CD4-positive, alpha-beta T cell (primary cell): ENCODE measurements at regions of chr6 and their contacts with region 1.

Region 1: DNA sequence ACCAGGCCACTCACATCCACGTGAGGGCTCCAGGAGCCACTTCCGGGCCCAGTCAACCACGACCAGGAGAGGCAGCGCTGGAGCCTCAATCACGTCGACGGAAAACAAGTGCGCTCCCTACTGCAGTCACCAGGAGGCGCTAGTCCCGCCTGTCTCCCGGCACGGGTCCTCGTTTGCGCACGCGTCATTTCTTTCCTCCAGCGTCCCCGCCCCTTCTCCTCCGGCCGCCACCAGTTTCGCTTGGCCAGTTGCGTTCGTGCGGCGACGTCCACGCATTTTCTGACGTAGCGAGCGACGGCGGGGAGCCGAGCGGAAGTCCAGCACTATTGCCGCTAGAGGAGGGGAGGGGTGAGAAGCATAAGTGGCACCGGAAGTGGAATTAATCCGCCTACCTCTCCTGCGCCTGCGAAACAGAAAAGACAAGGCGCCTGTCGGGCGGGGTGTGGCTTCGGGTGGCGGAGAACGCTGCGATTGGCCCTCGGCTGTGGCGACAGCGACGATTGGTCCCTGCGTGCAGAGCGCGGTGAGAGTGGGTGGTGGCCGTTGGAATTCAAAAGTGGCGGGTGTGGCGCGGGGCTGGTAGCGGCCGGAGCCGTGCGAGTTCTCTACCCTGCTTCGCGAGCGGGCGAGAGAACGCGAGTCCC is at the start of gene KIFC1:
- DNase-seq: peak; percentile 98 to 100 (median 99)
- ATAC-seq: peak; percentile 86
- H3K4me3 ChIP-seq: peak within 1 kb of the TSS; percentile 65
- H3K4me3 Mint-ChIP-seq: peak within 1 kb of the TSS; percentile 87
- H3K27ac ChIP-seq: peak within 1 kb of the TSS; percentile 69 to 78
- H3K27ac Mint-ChIP-seq: peak within 1 kb of the TSS; percentile 91
- H3K4me1 ChIP-seq: peaks cover 25% of the 10 kb centered on the region
- H3K4me1 Mint-ChIP-seq: peaks cover 23% of the 10 kb centered on the region
- H3K27me3 ChIP-seq: no peaks in the 10 kb centered on the region
- H3K27me3 Mint-ChIP-seq: no peaks in the 10 kb centered on the region
- CTCF ChIP-seq: peak; percentile 99
- total RNA-seq, gene KIFC1: 1.2 to 1.6 TPM

Region 2: GRCh38 chr6:33323623-33323948 is 67.8 kb before region 1 on chr6:
- CTCF ChIA-PET with region 1: interaction called, 12 read pairs
- POLR2A ChIA-PET with region 1: no interaction called
- intact Hi-C with region 1: loop called (anchors 1 kb)
- DNase-seq: peak in 1 of 14 experiments; percentile 41
- ATAC-seq: no peak
- H3K4me3 ChIP-seq: peak overlapping the region; percentile 96
- H3K4me3 Mint-ChIP-seq: peak overlapping the region; percentile 100
- H3K27ac ChIP-seq: peak overlapping the region; percentile 77 to 92
- H3K27ac Mint-ChIP-seq: peak overlapping the region; percentile 96
- H3K4me1 ChIP-seq: peaks cover 44% of the 10 kb centered on the region
- H3K4me1 Mint-ChIP-seq: peaks cover 57% of the 10 kb centered on the region
- H3K27me3 ChIP-seq: no peaks in the 10 kb centered on the region
- H3K27me3 Mint-ChIP-seq: no peaks in the 10 kb centered on the region
- CTCF ChIP-seq: no peak

Region 3: DNA sequence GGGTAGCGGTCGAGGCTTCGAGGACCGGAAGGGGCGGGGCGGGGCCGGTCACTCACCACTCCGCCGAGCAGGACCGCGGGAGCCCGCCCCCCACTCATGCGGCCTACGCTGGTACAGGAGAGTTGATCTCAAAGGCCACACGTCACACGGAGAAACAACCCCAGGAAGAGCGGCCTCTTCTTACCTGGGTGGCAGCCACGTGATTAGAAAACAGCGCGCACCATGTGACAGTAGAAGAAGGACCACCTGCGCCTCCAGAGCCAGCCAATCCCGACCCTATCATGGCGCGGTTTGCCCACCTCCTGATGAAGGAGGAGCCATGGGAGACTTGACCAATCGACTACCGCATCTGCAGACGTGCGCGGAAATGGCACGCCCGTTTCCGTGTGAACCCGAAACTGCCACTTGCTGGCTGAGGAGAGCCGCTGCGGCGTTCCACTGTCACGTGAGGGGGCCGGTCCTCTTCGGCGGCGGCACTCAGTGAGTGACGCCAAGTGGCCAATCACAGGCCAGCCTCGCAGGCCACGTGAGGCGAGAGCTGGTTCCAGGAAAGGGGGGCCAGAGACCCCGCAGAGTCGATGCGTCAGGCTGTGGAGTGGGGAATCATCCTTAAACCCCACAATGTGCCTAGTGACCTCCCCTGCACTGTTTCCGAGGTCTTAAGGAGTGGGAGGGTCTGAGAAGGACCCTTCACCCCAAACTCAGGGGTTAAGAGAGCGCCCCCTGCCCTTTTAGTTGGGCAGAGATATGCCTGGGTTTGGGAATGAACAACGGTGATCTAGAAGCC is 26.7 kb after region 1 on chr6 and contains the start of gene CUTA:
- CTCF ChIA-PET with region 1: interaction called, 5 read pairs
- POLR2A ChIA-PET with region 1: interaction called, 12 read pairs
- intact Hi-C with region 1: no loop called
- DNase-seq: peak; percentile 97 to 100 (median 98)
- ATAC-seq: peak; percentile 85
- H3K4me3 ChIP-seq: peak within 1 kb of the TSS; percentile 82
- H3K4me3 Mint-ChIP-seq: peak within 1 kb of the TSS; percentile 92
- H3K27ac ChIP-seq: peak within 1 kb of the TSS; percentile 97 to 99
- H3K27ac Mint-ChIP-seq: peak within 1 kb of the TSS; percentile 98
- H3K4me1 ChIP-seq: peaks cover 77% of the 10 kb centered on the region
- H3K4me1 Mint-ChIP-seq: peaks cover 79% of the 10 kb centered on the region
- H3K27me3 ChIP-seq: no peaks in the 10 kb centered on the region
- H3K27me3 Mint-ChIP-seq: no peaks in the 10 kb centered on the region
- CTCF ChIP-seq: peak; percentile 30
- total RNA-seq, gene CUTA: 176 to 185 TPM

Region 4: DNA sequence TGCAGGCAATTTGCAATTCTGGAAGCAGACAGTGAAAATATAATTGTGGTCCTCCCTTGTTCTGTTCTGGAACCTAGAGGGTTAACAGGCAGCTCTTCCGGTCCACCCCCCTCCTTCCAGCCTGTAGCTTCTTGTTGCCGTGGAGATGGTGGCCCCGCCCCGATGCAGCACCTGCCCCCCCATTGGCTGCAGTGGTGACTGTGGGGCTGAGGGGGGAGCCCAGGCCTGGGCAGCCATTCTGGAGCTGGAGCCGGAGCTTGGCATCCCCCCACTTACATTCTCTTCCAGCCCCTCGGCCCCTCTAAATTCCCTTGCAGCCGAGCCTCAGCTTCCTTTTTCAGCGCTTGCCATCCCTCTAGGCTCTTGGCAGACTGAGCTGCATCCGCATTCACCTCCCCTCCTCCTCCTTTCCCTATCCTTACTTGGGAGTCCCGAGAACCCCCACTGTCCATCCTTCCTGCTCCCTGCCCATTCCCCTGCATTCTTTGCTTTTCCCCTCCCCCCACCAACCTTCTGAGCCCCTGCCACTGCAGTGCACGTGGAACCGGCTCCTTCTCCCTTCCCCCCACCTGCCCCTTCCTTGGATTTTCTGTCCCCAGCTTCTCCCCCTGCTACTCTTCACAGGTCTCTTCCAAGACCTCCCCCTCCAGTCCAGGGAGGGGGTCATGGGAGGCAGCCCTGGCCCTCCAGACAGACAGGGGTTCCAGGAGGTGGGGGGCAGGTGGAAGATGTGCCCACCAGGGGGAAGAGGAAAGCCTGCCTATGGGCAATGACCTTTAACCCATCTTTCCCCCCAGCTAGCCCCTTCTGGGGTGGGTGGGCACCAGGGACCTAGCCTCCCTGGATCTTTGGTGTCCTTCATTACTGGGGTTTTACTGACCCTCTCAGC is 39.8 kb after region 1 on chr6:
- CTCF ChIA-PET with region 1: interaction called, 25 read pairs
- POLR2A ChIA-PET with region 1: interaction called, 14 read pairs
- intact Hi-C with region 1: loop called in 1 of 2 experiments (anchors 1 kb)
- DNase-seq: peak; percentile 74 to 92 (median 85)
- ATAC-seq: peak; percentile 66
- H3K4me3 ChIP-seq: peak overlapping the region; percentile 71
- H3K4me3 Mint-ChIP-seq: peak overlapping the region; percentile 93
- H3K27ac ChIP-seq: peak overlapping the region; percentile 52 to 64
- H3K27ac Mint-ChIP-seq: peak overlapping the region; percentile 92
- H3K4me1 ChIP-seq: peaks cover 63% of the 10 kb centered on the region
- H3K4me1 Mint-ChIP-seq: peaks cover 65% of the 10 kb centered on the region
- H3K27me3 ChIP-seq: no peaks in the 10 kb centered on the region
- H3K27me3 Mint-ChIP-seq: no peaks in the 10 kb centered on the region
- CTCF ChIP-seq: no peak